Activated T-helper 1 cell treated with anti-CD3 and anti-CD28 coated beads, Interleukin-12 subunit alpha, Interleukin-12 subunit beta, Interleukin-2, Interleukin-4 antibody, amounts not matched to agents 30 ng/mL and 10 ng/mL and 1 ng/mL, durations not matched to agents 14 hours and 24 hours and 36 hours (primary cell): ENCODE measurements at regions of chr10 and their contacts with region 1.

Region 1: DNA sequence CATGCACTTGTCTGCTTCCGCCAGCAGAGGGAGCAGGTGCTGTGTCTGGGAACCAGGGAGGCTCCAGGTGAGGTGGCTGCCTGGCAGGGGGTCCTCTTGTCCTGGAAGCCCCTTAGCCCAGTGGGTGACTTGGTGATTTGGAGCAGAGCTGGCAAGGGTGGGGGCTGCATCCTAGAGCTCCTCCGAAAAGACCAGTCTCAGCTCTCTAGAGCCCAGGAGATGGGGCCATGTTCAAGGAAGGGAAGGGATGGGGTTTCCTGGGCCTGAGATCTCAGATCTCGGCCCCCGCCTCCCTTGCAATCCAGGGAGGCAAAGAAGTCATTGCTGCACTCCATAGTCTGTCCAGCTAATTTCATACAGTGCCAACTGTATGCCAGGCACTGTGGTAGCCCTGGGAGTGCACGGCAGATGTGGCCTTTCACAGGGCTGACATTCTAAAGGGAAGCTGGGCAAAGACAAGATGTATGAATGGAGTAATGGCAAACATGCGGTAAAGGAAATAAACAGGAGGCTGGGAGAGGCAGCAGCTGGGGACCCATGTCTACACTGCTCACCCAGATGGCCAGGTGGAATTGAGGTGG is 20.4 kb upstream of the SFRP5 start:
- DNase-seq: peak; percentile 56
- H3K4me3 Mint-ChIP-seq: no peak overlapping the region
- H3K27ac Mint-ChIP-seq: no peak overlapping the region
- H3K4me1 Mint-ChIP-seq: peaks cover 21% of the 10 kb centered on the region
- H3K27me3 Mint-ChIP-seq: peaks cover 9% of the 10 kb centered on the region

Region 2: DNA sequence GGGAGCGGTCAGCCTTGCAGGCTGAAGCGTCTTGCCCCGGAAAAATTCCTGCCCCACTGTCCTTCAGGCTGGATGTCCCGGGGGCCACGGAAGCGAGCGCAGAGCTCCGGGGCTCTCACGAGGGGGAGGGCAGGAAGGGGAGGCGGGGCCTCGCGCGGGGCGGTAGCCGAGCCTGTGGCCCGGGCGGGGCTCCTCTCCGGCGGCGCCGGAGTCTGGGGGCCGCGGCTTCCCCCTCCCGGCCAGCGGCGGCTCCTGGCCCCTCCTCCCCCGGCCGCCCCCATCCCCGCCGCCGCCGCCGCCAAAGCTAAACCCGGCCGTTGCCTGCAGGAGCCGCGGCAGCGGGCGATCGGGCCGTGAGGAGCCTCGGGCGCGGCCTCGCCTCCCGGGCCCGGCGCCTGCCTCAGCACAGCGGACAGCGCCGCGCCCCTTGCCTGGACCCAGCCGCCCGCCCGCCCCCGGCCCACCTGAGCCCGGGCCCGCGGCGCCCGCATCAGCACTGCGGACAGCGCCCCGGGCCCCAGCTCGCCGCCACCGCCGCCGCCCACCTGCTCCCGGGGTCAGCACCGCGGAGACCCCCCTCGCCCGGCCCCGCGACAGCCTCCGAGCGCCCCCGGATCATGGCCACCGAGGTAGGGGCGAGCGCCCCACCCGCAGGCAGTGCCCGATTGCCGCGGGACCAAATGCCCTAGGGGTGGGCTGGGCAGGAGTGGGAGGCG is 57.6 kb after region 1 on chr10 and contains the start of gene GOLGA7B:
- intact Hi-C with region 1: loop called (anchors 2 kb)
- DNase-seq: peak; percentile 59
- H3K4me3 Mint-ChIP-seq: peak within 1 kb of the TSS; percentile 89
- H3K27ac Mint-ChIP-seq: peak within 1 kb of the TSS; percentile 44
- H3K4me1 Mint-ChIP-seq: peaks cover 31% of the 10 kb centered on the region
- H3K27me3 Mint-ChIP-seq: peaks cover 15% of the 10 kb centered on the region
- total RNA-seq, gene GOLGA7B: 0.26 and 0.29 TPM in 2 replicates

Region 3: DNA sequence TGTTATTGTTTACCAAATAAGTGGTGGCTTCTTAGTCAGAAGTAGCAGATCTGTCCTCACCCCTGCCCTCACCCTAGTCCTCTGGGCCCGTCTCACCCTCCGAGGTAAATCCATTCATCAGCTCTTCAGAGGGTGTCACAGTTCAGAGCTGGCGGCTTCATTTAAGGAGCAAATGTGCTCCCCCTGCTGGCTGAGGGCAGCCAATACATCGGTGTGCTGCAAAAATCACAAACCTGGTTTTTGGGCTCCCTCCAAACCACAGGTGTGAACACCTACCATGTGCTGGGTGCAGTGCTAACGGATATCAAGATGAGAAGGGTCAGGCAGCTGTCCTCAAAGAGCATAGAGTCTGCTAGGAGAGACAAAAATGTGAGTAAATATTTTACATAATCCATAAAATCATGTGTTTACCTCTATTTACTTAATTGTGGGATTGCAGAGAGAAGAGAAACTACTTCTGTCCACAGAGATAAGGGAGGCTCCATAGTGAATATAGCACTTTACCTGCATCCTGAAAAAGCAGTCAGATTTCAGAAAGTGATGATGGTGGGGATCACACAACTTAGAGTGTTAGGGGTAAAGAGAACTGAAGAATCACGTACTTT is 253.7 kb after region 1 on chr10:
- intact Hi-C with region 1: loop called (anchors 10 kb)
- DNase-seq: peak; percentile 32
- H3K4me3 Mint-ChIP-seq: no peak overlapping the region
- H3K27ac Mint-ChIP-seq: no peak overlapping the region
- H3K4me1 Mint-ChIP-seq: no peaks in the 10 kb centered on the region
- H3K27me3 Mint-ChIP-seq: peaks cover 29% of the 10 kb centered on the region